Psoas muscle (tissue), 8 donors: ENCODE measurements at regions of chrX and their contacts with region 1.

Region 1: DNA sequence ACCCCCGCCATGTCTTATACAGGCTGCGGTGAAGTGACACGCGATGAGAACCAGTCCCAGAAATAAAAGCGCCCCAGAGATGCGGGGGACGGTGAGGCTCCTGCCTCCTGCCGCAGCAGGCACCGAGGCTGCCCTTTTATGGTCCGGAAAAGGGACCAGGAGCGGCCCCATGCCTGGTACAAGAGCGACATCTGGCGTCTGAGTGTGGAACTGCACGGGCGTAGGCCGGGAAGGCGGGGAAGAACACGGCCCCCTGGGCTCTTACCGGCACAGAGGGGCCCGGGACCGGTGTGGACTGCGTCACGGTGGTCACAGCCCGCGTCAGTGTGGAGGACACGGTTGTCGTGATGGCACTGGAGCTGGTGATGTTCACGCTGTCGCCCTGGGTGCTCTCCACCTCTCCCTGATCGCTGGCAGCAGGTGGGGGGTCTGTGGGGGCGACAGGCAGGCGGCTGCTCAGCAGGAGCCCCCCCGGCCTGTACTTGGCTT is 8.9 kb upstream of the RENBP start:
- DNase-seq: peak; percentile 67 to 88
- ATAC-seq: peak; percentile 73 to 86 (median 79)
- H3K4me3 ChIP-seq: no peak overlapping the region
- H3K27ac ChIP-seq: peak overlapping the region; percentile 55
- H3K4me1 ChIP-seq: no peaks in the 10 kb centered on the region
- H3K27me3 ChIP-seq: no peaks in the 10 kb centered on the region
- CTCF ChIP-seq: peak; percentile 99

Region 2: DNA sequence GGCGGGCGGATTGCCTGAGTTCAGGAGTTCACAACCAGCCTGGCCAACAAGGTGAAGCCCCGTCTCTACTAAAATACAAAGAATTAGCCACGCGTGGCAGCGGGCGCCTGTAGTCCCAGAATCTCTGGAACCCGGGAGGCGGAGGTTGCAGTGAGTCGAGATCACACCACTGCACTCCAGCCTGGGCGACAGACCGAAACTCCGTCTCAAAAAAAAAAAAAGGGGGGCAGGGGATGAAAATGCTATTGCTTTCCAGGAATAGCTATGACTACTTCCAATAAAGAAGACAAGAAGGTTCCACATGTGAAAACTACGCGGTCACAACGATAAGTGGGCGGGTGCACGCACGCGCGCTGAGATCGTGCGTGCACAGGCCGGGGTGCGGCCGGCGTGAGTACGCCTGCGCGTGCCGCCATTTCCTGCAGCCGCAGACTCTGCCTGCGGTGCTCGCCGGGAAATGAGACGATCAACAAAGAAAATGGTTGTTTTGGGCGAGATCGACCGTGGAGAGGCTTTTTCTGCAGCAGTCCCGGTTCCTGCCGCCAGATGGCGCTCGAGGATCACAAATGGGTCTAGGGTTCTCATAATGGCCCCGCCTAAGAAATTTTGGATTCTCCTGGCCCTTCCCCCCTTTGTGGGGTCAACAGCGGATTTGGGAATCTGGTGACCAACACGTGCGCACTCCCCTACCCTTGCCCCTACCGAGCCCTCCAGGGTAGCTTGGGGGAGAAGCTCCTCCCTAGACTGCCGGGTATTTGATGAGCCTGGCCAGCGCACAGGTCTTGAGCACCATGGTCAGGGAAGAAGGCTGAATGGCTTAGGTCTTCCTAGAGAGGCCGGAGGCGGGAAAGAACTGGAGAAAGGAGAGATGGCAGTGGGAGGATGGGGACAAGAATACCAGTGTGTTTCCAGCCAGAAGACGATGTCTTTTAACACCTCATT is 994.6 kb before region 1 on chrX:
- intact Hi-C with region 1: loop called in 1 of 2 experiments (anchors 5 kb)
- DNase-seq: peak; percentile 86 to 94
- ATAC-seq: peak; percentile 95 to 99 (median 98)
- H3K4me3 ChIP-seq: peak overlapping the region; percentile 61
- H3K27ac ChIP-seq: peak overlapping the region; percentile 71
- H3K4me1 ChIP-seq: no peaks in the 10 kb centered on the region
- H3K27me3 ChIP-seq: peaks cover 0 to under 1% (median 0%) of the 10 kb centered on the region in 3 donors
- CTCF ChIP-seq: peak; percentile 92

Region 3: GRCh38 chrX:153539979-153540358 is 413.4 kb before region 1 on chrX:
- intact Hi-C with region 1: loop called in 1 of 2 experiments (anchors 5 kb)
- DNase-seq: no peak
- ATAC-seq: peak in 1 of 4 donors; percentile 7
- H3K4me3 ChIP-seq: no peak overlapping the region
- H3K27ac ChIP-seq: no peak overlapping the region
- H3K4me1 ChIP-seq: no peaks in the 10 kb centered on the region
- H3K27me3 ChIP-seq: peaks cover 0 to 28% (median 2%) of the 10 kb centered on the region in 3 donors
- CTCF ChIP-seq: no peak

Region 4: GRCh38 chrX:153763989-153764755 is 189.2 kb before region 1 on chrX and contains the start of gene PLXNB3:
- intact Hi-C with region 1: loop called (anchors 1 to 5 kb)
- DNase-seq: peak; percentile 81 to 88
- ATAC-seq: peak; percentile 86 to 93 (median 90)
- H3K4me3 ChIP-seq: no peak within 1 kb of the TSS
- H3K27ac ChIP-seq: no peak within 1 kb of the TSS
- H3K4me1 ChIP-seq: no peaks in the 10 kb centered on the region
- H3K27me3 ChIP-seq: no peaks in the 10 kb centered on the region
- CTCF ChIP-seq: peak; percentile 85
- total RNA-seq, gene PLXNB3: 0.27 to 1.5 (median 0.73) TPM

Region 5: DNA sequence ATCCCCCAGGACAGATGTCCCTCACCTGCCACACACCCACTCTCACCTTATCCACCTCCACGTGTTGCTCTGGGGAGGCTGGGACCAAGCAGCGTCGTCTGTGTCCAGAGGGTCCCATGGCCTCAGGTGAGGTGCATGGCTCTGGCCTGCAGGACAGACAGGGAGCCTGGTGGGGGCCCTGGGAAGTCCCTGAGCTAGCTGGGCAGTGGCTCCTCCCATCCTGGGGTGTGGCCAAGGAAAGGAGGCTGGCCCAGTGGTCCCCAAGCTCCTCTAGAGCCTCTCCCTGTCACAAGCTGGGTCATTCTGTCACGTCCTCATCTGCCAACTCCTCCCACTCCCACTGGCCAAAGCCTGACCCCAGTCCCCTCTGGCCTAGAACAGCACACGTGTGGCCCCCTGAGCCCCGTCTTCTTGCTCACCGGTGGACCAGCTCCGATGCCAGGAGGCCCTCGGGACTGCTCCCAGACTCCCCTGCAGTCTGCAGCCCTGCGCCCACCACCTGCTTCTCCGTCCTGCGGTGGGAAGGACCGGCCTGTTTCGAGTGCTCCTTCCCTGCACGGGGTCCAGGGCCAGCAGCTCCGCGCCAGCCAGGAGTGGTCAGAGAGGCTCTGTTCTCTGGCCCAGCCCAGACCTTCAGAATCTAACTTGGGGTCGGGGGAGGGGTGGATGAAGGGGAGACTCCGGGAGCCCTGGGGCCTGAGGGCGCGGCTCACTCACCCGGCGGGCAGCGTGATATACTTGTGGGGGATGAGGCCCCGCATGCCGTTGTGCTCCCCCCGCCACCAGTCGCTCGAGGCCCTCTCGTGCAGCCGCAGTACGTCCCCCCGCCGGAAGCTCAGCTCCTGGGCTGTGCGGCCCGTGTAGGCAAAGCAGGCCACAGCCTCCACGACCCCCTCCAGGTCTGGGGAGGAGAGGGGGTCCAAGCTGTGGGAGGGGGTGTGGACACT is 44.1 kb before region 1 on chrX:
- intact Hi-C with region 1: no loop called
- DNase-seq: no peak
- ATAC-seq: no peak
- H3K4me3 ChIP-seq: no peak overlapping the region
- H3K27ac ChIP-seq: no peak overlapping the region
- H3K4me1 ChIP-seq: no peaks in the 10 kb centered on the region
- H3K27me3 ChIP-seq: peaks cover 0 to 50% (median 1%) of the 10 kb centered on the region in 3 donors
- CTCF ChIP-seq: no peak